Esophagus muscularis mucosa (tissue), 4 donors: ENCODE measurements at regions of chr2 and their contacts with region 1.

Region 1: GRCh38 chr2:30711646-30712085 is 95.6 kb downstream of the CAPN13 start:
- DNase-seq: peak; percentile 93
- H3K4me3 ChIP-seq: no peak overlapping the region
- H3K27ac ChIP-seq: no peak overlapping the region
- H3K4me1 ChIP-seq: peaks cover 3 to 29% (median 20%) of the 10 kb centered on the region in 4 donors
- H3K27me3 ChIP-seq: no peaks in the 10 kb centered on the region
- CTCF ChIP-seq: peak in 2 of 3 experiments; percentile 97 to 99
- EP300 ChIP-seq: no peak
- POLR2A ChIP-seq: no peak

Region 2: GRCh38 chr2:30165050-30165520 is 546.6 kb before region 1 on chr2:
- intact Hi-C with region 1: loop called (anchors 2 kb)
- DNase-seq: no peak
- H3K4me3 ChIP-seq: no peak overlapping the region
- H3K27ac ChIP-seq: peak overlapping the region in 2 of 4 donors; percentile 17 to 34
- H3K4me1 ChIP-seq: peaks cover 7 to 32% (median 25%) of the 10 kb centered on the region in 4 donors
- H3K27me3 ChIP-seq: no peaks in the 10 kb centered on the region
- CTCF ChIP-seq: peak; percentile 81 to 90 (median 85)
- EP300 ChIP-seq: no peak
- POLR2A ChIP-seq: no peak

Region 3: GRCh38 chr2:30208452-30208851 is 503.2 kb before region 1 on chr2:
- intact Hi-C with region 1: loop called (anchors 2 kb)
- DNase-seq: no peak
- H3K4me3 ChIP-seq: no peak overlapping the region
- H3K27ac ChIP-seq: no peak overlapping the region
- H3K4me1 ChIP-seq: peaks cover 4 to 8% (median 7%) of the 10 kb centered on the region in 4 donors
- H3K27me3 ChIP-seq: no peaks in the 10 kb centered on the region
- CTCF ChIP-seq: peak; percentile 91 to 97 (median 93)
- EP300 ChIP-seq: no peak
- POLR2A ChIP-seq: no peak

Region 4: DNA sequence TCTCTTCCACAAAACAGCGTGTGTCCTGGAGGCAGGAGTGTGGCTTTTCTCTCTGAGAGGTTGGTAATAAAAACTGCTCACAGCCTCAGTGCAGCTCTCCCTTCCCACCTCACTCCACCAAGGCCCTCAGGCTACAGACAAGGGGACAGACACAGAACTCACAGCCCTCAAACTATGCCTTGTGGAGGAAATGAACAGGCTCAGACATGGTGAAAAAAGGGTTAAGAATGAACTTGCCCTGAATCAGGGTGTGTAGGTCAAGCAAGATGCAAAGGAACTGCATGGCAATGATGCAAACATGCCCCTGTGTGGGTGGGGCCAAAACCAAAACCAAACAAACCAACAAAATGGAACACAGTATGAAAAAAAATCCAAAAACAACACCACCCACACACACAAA is 300.7 kb after region 1 on chr2:
- intact Hi-C with region 1: no loop called
- DNase-seq: no peak
- H3K4me3 ChIP-seq: no peak overlapping the region
- H3K27ac ChIP-seq: no peak overlapping the region
- H3K4me1 ChIP-seq: peaks cover 0 to 11% (median 8%) of the 10 kb centered on the region in 4 donors
- H3K27me3 ChIP-seq: peaks cover 0 to 44% (median 0%) of the 10 kb centered on the region in 4 donors
- CTCF ChIP-seq: no peak
- EP300 ChIP-seq: no peak
- POLR2A ChIP-seq: no peak

Region 5: DNA sequence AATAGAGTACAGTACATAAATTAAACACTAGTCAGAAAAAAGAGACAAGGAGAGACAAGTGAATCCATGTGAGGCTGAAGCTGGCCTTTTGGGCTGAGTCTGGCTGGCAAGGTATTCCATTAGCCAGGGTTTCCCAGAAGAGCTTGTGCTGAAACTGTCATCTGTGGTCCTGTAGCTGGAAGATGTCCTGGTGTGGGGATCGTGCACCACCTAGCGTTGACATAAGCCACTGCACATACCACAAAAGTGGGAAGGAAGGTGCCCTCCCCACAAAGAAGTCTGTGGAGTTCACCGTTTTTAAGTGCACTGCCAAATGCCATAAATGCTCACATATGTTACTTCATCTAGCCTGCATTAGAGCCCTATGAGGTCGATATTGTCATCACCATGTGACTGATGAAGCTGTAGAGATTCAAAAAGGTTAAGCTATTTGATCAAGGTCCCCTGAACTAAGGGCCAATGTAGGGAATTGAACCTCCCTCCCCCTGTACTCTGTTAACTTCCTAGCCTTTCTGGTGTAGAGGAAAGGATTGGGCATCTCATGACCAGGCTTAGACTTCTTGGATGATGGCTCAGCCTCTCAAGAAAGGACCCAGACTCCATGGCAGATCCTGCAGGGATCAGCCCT is 458.5 kb after region 1 on chr2:
- intact Hi-C with region 1: loop called (anchors 2 kb)
- DNase-seq: no peak
- H3K4me3 ChIP-seq: no peak overlapping the region
- H3K27ac ChIP-seq: no peak overlapping the region
- H3K4me1 ChIP-seq: no peaks in the 10 kb centered on the region
- H3K27me3 ChIP-seq: peaks cover 0 to 3% (median 0%) of the 10 kb centered on the region in 4 donors
- CTCF ChIP-seq: peak; percentile 79 to 96 (median 86)
- EP300 ChIP-seq: no peak
- POLR2A ChIP-seq: no peak

Region 6: GRCh38 chr2:31333527-31334183 is 622.0 kb after region 1 on chr2:
- intact Hi-C with region 1: loop called (anchors 2 kb)
- DNase-seq: peak; percentile 93
- H3K4me3 ChIP-seq: no peak overlapping the region
- H3K27ac ChIP-seq: no peak overlapping the region
- H3K4me1 ChIP-seq: no peaks in the 10 kb centered on the region
- H3K27me3 ChIP-seq: peaks cover 0 to 4% (median 0%) of the 10 kb centered on the region in 4 donors
- CTCF ChIP-seq: peak; percentile 86 to 93 (median 91)
- EP300 ChIP-seq: no peak
- POLR2A ChIP-seq: no peak

Region 7: DNA sequence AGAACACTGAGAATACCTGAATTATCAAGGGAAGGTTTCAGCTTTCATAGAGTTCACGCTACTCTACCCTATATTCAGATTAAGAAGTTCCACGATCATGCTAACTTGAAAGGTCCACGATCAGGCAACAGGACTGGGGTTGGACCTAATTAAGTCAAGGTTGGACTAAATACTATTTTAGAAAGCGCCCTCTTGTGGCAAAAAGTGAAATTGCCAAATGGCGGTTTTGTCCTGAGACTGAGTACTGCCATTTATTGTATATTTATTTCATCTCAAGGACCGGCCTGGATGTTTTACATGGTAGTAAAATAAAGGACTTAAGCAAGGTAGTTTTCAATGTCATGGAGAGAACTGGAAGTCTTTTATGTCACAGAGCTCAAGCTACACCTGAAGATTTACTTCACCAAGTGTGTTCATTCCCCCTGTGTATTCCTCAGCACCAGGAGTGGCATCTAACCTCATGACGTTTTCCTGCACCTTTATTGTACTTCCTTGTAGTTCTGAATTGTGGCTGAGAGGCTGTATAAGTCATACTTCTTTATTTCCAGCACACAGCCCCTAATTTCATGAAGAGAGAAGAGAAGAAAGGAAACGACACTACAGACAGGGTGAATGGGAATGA is 812.3 kb after region 1 on chr2:
- intact Hi-C with region 1: loop called (anchors 10 kb)
- DNase-seq: peak; percentile 87
- H3K4me3 ChIP-seq: no peak overlapping the region
- H3K27ac ChIP-seq: no peak overlapping the region
- H3K4me1 ChIP-seq: no peaks in the 10 kb centered on the region
- H3K27me3 ChIP-seq: no peaks in the 10 kb centered on the region
- CTCF ChIP-seq: peak; percentile 36 to 60 (median 45)
- EP300 ChIP-seq: no peak
- POLR2A ChIP-seq: no peak